CD4-positive, alpha-beta memory T cell (primary cell): ENCODE measurements at regions of chr6 and their contacts with region 1.

Region 1: DNA sequence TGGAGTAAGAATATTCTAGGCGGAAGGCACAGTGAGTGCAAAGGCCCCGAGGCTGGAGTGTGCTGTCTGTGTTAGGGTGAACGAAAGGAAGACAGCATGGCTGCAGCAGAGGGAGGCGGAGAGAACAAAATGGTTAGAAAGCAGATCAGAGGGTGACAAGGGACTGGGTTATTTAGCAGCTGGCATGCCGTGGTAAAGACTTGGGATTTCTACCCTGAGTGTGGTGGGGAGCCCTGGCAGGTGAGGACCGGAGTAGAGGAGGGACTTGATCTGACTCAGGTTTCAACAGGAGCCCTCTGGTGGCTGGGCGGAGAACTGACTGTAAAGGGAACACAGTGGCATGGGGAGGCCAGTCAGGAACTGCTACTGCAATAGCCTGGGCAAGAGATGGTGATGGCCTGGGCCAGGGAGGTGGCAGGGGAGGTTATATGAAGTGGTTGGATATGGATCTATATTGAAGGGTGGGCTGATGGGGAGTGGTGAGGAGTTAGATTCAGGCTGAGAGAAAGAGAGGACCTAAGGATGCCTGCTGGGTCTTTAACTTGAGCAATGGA is 38.0 kb downstream of the PIM1 start:
- DNase-seq: peak; percentile 80 to 90 (median 84)
- H3K4me3 ChIP-seq: no peak overlapping the region
- H3K4me3 Mint-ChIP-seq: peak overlapping the region; percentile 26 to 74 (median 54)
- H3K27ac ChIP-seq: no peak overlapping the region
- H3K27ac Mint-ChIP-seq: peak overlapping the region; percentile 57 to 98 (median 86)
- H3K4me1 ChIP-seq: peaks cover 48% of the 10 kb centered on the region
- H3K4me1 Mint-ChIP-seq: peaks cover 39 to 58% (median 48%) of the 10 kb centered on the region in 4 donors
- H3K27me3 ChIP-seq: no peaks in the 10 kb centered on the region
- H3K27me3 Mint-ChIP-seq: no peaks in the 10 kb centered on the region

Region 2: DNA sequence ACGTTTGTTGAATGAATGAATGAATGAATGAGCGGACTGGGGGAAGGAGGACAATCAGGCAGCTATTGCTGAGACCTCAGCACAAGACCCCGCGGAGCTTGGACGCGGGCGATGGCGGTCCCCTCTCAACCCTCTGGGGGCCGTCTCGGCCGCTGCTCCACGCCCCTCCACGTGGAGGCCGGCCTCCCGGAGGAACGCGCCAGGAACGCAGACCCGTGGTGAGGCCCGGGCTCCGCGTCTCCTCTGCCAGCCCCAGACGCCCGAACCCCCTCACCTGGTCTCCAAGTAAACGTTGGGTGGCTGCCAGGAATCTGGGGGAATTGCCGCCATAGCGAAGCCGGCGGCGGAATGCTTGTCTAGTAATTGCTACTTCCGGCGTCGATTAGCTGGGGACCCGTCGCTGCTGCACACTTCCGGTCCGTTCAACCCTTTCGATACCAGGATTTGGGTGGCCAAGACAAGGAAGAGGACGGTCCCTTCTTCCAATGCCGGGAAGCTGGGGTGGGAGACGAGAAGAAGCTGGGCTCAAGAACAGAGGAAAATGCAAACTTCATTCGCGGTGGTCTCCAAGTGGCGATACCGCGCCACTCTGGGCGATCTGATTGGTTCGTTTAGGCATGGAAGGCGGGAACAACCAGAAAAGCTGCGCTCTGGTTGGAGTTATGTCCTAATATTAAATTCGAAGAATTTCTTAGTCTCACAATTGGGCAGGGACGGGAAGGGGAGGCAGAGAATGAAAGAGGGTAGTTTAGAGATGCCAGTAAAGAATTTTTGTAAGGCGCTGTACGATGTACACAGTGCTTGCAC is 333.3 kb before region 1 on chr6 and contains the start of gene PPIL1:
- CTCF ChIA-PET with region 1: interaction called, 20 read pairs
- POLR2A ChIA-PET with region 1: interaction called, 5 read pairs
- intact Hi-C with region 1: no loop called
- DNase-seq: peak; percentile 91 to 94 (median 92)
- H3K4me3 ChIP-seq: peak within 1 kb of the TSS; percentile 95 to 96
- H3K4me3 Mint-ChIP-seq: peak within 1 kb of the TSS; percentile 95 to 100 (median 98)
- H3K27ac ChIP-seq: peak within 1 kb of the TSS; percentile 87
- H3K27ac Mint-ChIP-seq: peak within 1 kb of the TSS; percentile 91 to 100 (median 98)
- H3K4me1 ChIP-seq: peaks cover 23% of the 10 kb centered on the region
- H3K4me1 Mint-ChIP-seq: peaks cover 22 to 37% (median 31%) of the 10 kb centered on the region in 4 donors
- H3K27me3 ChIP-seq: no peaks in the 10 kb centered on the region
- H3K27me3 Mint-ChIP-seq: peaks cover 0 to 1% of the 10 kb centered on the region in 2 donors
- total RNA-seq, gene PPIL1: 8.4 to 9.2 TPM

Region 3: DNA sequence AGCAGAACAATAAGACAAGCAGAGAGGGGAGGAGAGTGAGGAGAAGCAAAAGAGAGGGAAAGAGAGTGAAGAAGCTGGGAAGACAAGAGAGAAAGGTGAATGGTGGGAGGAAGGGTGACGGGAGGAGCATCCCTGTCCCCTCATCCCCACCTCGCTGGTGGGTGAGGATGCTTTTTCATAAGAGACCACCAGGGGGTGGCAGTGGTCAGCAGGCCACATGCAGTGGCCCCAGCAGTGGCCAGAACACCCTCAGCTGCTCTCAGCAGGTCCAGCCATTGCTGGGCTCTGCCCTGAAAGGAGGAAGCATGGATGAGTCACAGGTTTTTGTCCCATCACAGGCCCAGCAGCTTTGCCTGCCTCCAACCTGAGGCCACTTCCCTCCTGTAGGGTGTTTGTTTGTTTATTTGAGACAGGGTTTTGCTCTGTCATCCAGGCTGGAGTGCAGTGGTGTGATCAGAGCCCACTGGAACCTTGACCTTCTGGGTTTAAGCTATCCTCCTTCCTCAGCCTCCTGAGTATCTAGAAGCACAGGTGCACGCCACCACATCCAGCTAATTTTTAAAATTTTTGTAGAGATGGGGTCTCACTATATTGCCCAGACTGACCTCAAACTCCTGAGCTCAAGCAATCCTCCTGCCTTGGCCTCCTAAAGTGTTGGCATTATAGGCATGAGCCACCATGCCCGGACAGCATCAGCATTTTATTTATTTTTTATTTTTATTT is 178.6 kb before region 1 on chr6:
- CTCF ChIA-PET with region 1: interaction called, 1,184 read pairs
- POLR2A ChIA-PET with region 1: interaction called, 23 read pairs
- intact Hi-C with region 1: loop called (anchors 1 kb)
- DNase-seq: peak in 3 of 5 donors; percentile 19 to 39 (median 38)
- H3K4me3 ChIP-seq: no peak overlapping the region
- H3K4me3 Mint-ChIP-seq: peak overlapping the region in 1 of 8 donors; percentile 35
- H3K27ac ChIP-seq: no peak overlapping the region
- H3K27ac Mint-ChIP-seq: peak overlapping the region in 6 of 7 donors; percentile 10 to 82 (median 25)
- H3K4me1 ChIP-seq: peaks cover 17% of the 10 kb centered on the region
- H3K4me1 Mint-ChIP-seq: peaks cover 14 to 40% (median 30%) of the 10 kb centered on the region in 4 donors
- H3K27me3 ChIP-seq: no peaks in the 10 kb centered on the region
- H3K27me3 Mint-ChIP-seq: no peaks in the 10 kb centered on the region

Region 4: GRCh38 chr6:37056439-37057127 is 151.4 kb before region 1 on chr6:
- CTCF ChIA-PET with region 1: interaction called, 164 read pairs
- POLR2A ChIA-PET with region 1: interaction called, 54 read pairs
- intact Hi-C with region 1: loop called (anchors 1 kb)
- DNase-seq: no peak
- H3K4me3 ChIP-seq: no peak overlapping the region
- H3K4me3 Mint-ChIP-seq: no peak overlapping the region
- H3K27ac ChIP-seq: no peak overlapping the region
- H3K27ac Mint-ChIP-seq: no peak overlapping the region
- H3K4me1 ChIP-seq: peaks cover 8% of the 10 kb centered on the region
- H3K4me1 Mint-ChIP-seq: peaks cover 6 to 13% (median 10%) of the 10 kb centered on the region in 4 donors
- H3K27me3 ChIP-seq: no peaks in the 10 kb centered on the region
- H3K27me3 Mint-ChIP-seq: no peaks in the 10 kb centered on the region

Region 5: DNA sequence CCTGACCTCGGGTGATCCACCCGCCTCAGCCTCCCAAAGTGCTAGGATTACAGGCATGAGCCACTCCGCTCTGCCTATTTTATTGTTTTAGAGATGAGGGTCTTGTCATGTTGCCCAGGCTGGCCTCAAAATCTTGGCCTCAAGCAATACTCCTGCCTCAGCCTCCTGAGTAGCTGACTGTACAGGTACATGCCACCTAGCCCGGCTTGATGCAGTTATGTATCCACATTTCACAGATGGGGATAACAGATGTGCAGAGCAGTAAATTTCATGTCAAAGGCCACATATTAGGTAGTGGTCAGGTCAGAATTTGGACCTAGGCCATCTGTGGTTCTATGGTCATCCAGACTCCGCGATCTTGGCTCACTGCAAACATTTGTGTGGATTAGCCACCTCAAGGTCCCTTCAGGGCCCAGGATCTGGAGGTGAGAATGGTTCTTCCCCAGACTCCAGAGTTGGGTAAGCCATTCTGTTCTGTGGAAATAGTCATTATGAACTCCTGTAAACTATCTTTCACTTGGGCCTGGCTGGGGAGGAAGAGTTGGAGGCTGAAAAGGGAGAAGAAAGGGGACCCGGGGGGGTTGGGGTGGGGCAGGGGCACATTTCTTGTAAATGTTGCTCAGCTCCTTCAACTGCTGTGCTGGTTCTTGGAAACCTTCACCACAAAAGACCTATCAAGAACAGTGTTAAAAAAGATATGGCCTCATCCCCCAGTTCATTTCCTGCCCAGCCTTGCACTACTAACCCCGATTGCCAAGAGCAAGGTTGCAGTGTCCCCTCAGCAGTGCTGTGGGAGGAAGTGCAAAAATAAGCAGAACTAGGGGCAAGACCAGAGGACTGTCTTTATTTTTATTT is 25.0 kb before region 1 on chr6:
- CTCF ChIA-PET with region 1: interaction called, 315 read pairs
- POLR2A ChIA-PET with region 1: interaction called, 15 read pairs
- intact Hi-C with region 1: loop called (anchors 1 kb)
- DNase-seq: peak; percentile 70 to 79 (median 74)
- H3K4me3 ChIP-seq: peak overlapping the region; percentile 14 to 21
- H3K4me3 Mint-ChIP-seq: peak overlapping the region in 7 of 8 donors; percentile 55 to 77 (median 71)
- H3K27ac ChIP-seq: peak overlapping the region; percentile 52
- H3K27ac Mint-ChIP-seq: peak overlapping the region; percentile 79 to 94 (median 89)
- H3K4me1 ChIP-seq: peaks cover 86% of the 10 kb centered on the region
- H3K4me1 Mint-ChIP-seq: peaks cover 33 to 70% (median 47%) of the 10 kb centered on the region in 4 donors
- H3K27me3 ChIP-seq: no peaks in the 10 kb centered on the region
- H3K27me3 Mint-ChIP-seq: no peaks in the 10 kb centered on the region

Region 6: DNA sequence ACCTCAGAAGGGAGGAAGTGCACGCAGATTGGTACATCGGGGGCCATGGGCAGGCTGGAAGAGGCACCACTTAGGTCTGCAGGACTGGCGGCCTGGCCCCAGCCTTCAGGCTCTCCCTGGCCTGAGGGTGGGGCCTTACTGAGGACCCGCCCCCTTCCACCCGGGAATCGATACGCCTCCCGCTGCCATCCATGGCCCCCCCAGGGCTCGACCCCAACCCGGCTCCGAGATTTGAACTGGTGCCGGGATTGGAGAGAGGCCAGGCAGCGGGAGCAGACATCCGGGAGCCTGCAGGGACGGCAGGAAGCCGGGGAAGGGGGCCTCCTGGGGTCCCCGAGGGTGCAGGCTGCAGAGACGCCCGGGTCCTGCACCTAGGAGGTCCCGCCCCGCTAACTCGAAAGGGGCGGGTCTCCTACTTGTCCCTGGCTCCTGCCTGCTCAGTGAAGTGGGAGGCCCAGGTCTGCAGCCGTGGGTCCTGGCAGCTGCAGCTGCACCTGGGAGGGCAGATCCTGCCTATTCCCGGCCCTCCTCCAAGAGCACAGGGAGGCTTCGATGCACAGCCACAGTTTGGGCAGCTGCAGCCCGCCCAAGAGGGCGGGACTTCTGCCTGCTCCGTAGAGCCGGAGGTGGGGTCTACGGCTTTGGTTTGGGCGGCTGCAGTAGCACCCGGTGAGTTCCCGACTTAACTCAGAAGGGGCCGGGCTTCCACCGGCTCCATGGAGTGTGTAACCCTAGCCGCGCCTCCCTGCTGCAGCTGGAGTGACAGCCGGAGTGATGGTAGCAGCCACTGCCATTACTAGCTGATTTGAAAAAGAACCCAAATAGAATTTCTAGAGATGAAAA is 14.4 kb after region 1 on chr6:
- CTCF ChIA-PET with region 1: interaction called, 20 read pairs
- POLR2A ChIA-PET with region 1: no interaction called
- intact Hi-C with region 1: no loop called
- DNase-seq: peak; percentile 54 to 80 (median 63)
- H3K4me3 ChIP-seq: peak overlapping the region; percentile 55 to 94
- H3K4me3 Mint-ChIP-seq: peak overlapping the region; percentile 85 to 91 (median 88)
- H3K27ac ChIP-seq: no peak overlapping the region
- H3K27ac Mint-ChIP-seq: peak overlapping the region in 5 of 7 donors; percentile 30 to 79 (median 52)
- H3K4me1 ChIP-seq: peaks cover 7% of the 10 kb centered on the region
- H3K4me1 Mint-ChIP-seq: peaks cover 7 to 13% (median 9%) of the 10 kb centered on the region in 4 donors
- H3K27me3 ChIP-seq: no peaks in the 10 kb centered on the region
- H3K27me3 Mint-ChIP-seq: peaks cover 0 to 2% of the 10 kb centered on the region in 2 donors